Gastrocnemius medialis (tissue), 4 donors: ENCODE measurements at regions of chr10 and their contacts with region 1.

Region 1: DNA sequence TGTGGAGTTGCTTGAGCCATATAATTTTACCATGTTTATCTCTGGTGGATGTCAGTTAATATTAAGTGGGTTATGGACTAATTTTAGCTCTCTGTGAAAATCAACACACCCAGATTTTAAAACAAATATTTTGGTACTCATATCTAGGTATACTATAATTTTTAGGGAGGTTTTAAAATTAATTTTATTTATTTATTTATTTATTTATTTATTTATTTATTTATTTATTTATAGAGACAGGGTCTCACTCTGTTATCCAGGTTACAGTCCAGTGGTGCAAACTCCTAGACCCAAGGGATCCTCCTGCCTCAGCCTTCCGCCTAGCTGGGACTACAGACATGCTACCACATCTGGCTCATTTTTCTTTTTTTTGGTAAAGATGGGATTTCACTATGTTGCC is 7.3 kb upstream of the CREM start:
- DNase-seq: no peak
- ATAC-seq: no peak
- H3K4me3 ChIP-seq: no peak overlapping the region
- H3K27ac ChIP-seq: no peak overlapping the region
- H3K4me1 ChIP-seq: no peaks in the 10 kb centered on the region
- H3K27me3 ChIP-seq: no peaks in the 10 kb centered on the region
- CTCF ChIP-seq: no peak
- POLR2A ChIP-seq: no peak

Region 2: GRCh38 chr10:35218339-35218955 is 99.1 kb after region 1 on chr10:
- in situ Hi-C with region 1: loop called (anchors 5 kb)
- intact Hi-C with region 1: loop called (anchors 1 kb)
- DNase-seq: peak; percentile 55 to 74
- ATAC-seq: peak; percentile 61 to 72
- H3K4me3 ChIP-seq: no peak overlapping the region
- H3K27ac ChIP-seq: peak overlapping the region; percentile 47 to 70 (median 58)
- H3K4me1 ChIP-seq: peaks cover 31 to 32% of the 10 kb centered on the region in 2 donors
- H3K27me3 ChIP-seq: no peaks in the 10 kb centered on the region
- CTCF ChIP-seq: peak; percentile 80 to 86 (median 83)
- POLR2A ChIP-seq: no peak